ENCODE measurements at regions of chr11 and their contacts with region 1.

Region 1: DNA sequence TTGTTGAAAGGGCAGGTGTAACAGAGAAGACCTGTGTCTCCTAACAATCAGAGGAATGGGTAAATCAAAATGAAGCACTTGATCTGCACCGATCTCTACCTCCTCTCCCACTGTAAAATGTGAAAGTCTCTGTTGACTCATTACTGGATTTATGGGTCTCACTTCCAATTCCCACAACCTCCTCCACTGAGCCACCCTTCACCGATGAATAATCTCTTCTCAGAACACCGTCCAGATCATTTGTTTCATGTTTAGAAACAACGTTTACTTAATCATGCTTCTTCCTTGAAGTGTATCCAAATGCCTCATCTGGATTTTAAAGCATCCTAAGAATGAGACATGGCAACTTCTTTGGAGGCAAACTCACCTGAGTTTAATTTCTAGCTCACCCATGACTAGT is 643.6 kb downstream of the ETS1 start:
- DNase-seq: peak; percentile 27
- ATAC-seq: peak; percentile 88
- H3K4me3 Mint-ChIP-seq: no peak overlapping the region
- H3K27ac Mint-ChIP-seq: no peak overlapping the region
- H3K4me1 Mint-ChIP-seq: peaks cover 15% of the 10 kb centered on the region
- H3K27me3 Mint-ChIP-seq: peaks cover 30% of the 10 kb centered on the region

Region 2: DNA sequence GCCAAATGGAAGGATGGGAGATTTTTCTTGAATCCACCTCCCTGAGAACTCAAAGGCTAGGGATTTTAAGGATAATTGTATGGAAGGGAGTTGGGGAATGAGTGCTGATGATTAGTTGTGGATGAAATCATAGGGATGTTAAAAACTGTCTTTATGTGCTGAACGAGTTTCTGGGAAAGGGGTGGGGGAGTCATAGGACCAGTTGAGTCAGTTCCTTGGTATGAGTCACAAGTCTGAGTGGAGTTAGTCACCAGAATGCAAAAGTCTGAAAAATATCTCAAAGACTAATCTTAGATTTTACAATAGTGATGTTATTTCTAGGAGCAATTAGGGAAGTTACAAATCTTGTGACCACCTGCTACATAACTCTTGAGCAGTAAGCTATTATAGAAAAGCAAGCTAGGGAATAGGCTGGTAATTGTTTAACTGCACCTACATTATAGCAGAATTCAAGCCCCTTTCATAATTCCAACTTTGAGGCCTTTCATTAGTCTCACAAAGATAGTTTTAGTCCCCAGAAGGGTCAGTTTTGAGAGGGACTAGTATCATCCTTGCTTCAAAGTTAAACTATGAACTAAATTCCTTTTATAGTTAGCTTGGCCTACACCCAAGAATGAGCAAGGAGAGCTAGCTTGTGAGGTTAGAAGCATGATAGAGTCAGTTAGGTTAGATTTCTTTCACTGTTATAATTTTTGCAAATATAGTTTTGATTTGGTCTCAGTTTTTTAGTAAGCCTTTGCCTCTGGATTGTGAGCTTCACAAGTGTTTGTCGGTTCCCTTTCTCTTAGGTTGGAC is 24.4 kb before region 1 on chr11:
- CTCF ChIA-PET with region 1: no interaction called
- POLR2A ChIA-PET with region 1: no interaction called
- intact Hi-C with region 1: loop called in 1 of 2 experiments (anchors 1 kb)
- DNase-seq: peak; percentile 42
- ATAC-seq: peak; percentile 89
- H3K4me3 Mint-ChIP-seq: no peak overlapping the region
- H3K27ac Mint-ChIP-seq: no peak overlapping the region
- H3K4me1 Mint-ChIP-seq: peaks cover 10% of the 10 kb centered on the region
- H3K27me3 Mint-ChIP-seq: peaks cover 40% of the 10 kb centered on the region

Region 3: DNA sequence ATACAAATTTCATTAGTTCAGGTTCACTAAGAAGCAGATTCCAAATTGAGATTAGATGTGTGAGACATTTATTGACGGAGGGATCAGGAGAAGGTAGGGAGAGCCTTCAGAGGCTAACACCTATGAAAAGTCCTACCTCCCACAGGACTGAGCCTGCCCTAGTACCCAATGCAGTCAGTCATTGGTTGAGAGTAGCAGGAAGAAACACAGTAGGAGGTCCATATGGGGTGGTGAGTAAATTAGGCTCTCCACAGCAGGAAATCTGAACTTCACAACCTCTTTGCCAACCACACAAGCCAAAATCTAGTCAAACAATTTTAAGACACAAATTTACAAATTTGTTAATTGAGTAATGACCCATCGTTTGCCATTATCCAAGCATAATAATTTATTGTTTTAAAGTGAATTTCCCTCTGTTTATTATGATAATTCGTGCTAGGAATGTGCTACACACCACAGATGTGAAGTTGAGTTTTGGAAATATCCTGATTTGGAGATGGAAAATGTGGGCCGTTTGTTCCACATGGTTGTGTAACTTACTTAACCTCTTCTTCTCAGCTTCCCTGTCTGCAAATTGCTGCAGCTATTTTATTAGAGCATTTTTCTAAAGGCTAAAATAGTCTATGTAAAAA is 101.4 kb after region 1 on chr11:
- CTCF ChIA-PET with region 1: no interaction called
- POLR2A ChIA-PET with region 1: no interaction called
- intact Hi-C with region 1: no loop called
- DNase-seq: no peak
- ATAC-seq: peak; percentile 51
- H3K4me3 Mint-ChIP-seq: no peak overlapping the region
- H3K27ac Mint-ChIP-seq: no peak overlapping the region
- H3K4me1 Mint-ChIP-seq: peaks cover 46% of the 10 kb centered on the region
- H3K27me3 Mint-ChIP-seq: no peaks in the 10 kb centered on the region